Posterior vena cava (tissue), 2 donors: ENCODE measurements at regions of chr6 and their contacts with region 1.

Region 1: GRCh38 chr6:139343052-139343750 is 31.2 kb downstream of the CITED2 start:
- DNase-seq: no peak

Region 2: DNA sequence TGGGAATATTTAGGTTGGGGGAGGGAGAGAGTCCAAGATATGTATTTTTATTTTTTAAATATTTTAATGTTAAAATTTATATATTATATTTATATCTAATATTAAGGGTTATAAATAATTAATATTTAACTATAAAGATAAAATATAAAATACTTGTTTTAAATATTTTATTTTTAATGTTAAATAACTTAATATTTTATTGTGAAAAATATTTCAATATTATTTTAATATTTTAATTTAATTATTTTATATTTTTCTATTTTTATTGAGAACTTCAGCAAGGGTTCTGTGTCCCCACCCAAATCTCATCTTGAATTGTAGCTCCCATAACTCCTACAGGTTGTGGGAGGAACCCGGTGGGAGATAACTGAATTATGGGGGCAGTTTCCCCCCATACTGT is 1269.9 kb before region 1 on chr6:
- intact Hi-C with region 1: no loop called
- DNase-seq: no peak

Region 3: DNA sequence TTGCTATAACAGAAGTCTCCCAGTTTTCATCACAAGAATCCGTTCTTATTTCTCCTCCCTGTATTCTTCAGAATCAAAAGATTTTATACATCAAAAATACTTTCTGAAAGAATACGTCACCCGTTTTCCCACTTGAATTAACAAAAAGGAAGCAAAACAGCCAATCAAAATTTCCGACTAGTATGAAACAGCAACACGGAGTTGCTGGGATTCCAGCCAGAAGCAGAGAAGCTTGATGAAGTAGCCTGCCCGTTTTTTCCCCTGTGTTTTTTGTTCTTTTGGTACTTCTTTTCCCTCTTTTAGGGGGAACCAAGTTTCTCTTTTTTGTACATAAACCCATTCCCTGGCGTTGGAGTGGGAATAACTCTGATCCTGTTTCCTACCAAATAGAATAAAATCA is 66.0 kb before region 1 on chr6:
- intact Hi-C with region 1: loop called in 1 of 2 experiments (anchors 2 kb)
- DNase-seq: no peak